Mammary epithelial cell (primary cell): ENCODE measurements at regions of chr1 and their contacts with region 1.

Region 1: DNA sequence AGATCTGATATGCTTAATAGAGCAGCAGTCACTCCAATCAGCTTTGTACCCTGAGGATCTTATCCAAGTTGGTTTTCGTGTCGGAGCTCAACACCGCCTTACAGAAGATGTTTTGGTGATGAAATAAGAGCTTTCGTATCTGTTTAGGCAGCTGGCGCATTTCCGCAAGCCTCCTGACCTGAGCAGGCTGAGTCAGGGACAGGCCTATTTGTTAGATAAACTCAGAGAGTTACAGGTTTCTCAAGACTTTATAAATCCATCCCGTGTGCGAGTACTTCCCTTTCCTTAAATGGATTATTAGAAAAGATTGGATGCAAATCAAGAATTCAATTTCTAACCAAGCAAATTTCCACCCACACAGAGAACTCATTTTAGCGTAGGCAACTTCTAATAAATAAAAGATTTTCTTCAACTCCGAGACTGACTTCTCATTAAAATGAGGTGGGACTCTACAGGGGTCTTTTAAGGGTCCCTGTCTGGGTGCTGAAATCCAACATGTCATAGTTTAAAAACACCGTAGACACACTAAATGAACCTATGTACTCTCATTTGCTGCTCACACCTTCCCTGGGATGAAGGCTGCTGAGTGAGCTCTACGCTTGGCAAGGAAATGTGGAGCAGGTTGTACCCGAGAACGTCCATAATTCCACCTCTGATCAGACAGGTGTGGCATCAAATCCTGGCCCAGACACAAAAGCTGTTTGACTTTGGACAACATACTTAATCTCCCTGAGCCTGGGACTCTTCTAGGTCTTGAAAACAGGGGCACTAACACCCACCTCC is 106.9 kb upstream of the F3 start:
- DNase-seq: peak; percentile 98
- H3K4me3 ChIP-seq: peak overlapping the region in 1 of 3 experiments; percentile 1
- H3K27ac ChIP-seq: peak overlapping the region; percentile 90
- H3K4me1 ChIP-seq: peaks cover 61% of the 10 kb centered on the region
- H3K27me3 ChIP-seq: no peaks in the 10 kb centered on the region
- CTCF ChIP-seq: no peak

Region 2: GRCh38 chr1:94527447-94528031 is 120.9 kb before region 1 on chr1:
- CTCF ChIA-PET with region 1: interaction called, 14 read pairs
- dilution Hi-C with region 1: no loop called
- in situ Hi-C with region 1: no loop called
- intact Hi-C with region 1: no loop called
- DNase-seq: peak; percentile 89
- H3K4me3 ChIP-seq: no peak overlapping the region
- H3K27ac ChIP-seq: peak overlapping the region; percentile 8
- H3K4me1 ChIP-seq: no peaks in the 10 kb centered on the region
- H3K27me3 ChIP-seq: no peaks in the 10 kb centered on the region
- CTCF ChIP-seq: peak; percentile 8 to 21

Region 3: GRCh38 chr1:94599095-94599813 is 49.2 kb before region 1 on chr1:
- CTCF ChIA-PET with region 1: no interaction called
- dilution Hi-C with region 1: no loop called
- in situ Hi-C with region 1: no loop called
- intact Hi-C with region 1: loop called (anchors 5 kb)
- DNase-seq: peak; percentile 57
- H3K4me3 ChIP-seq: no peak overlapping the region
- H3K27ac ChIP-seq: no peak overlapping the region
- H3K4me1 ChIP-seq: peaks cover 30% of the 10 kb centered on the region
- H3K27me3 ChIP-seq: no peaks in the 10 kb centered on the region
- CTCF ChIP-seq: peak; percentile 62 to 85

Region 4: DNA sequence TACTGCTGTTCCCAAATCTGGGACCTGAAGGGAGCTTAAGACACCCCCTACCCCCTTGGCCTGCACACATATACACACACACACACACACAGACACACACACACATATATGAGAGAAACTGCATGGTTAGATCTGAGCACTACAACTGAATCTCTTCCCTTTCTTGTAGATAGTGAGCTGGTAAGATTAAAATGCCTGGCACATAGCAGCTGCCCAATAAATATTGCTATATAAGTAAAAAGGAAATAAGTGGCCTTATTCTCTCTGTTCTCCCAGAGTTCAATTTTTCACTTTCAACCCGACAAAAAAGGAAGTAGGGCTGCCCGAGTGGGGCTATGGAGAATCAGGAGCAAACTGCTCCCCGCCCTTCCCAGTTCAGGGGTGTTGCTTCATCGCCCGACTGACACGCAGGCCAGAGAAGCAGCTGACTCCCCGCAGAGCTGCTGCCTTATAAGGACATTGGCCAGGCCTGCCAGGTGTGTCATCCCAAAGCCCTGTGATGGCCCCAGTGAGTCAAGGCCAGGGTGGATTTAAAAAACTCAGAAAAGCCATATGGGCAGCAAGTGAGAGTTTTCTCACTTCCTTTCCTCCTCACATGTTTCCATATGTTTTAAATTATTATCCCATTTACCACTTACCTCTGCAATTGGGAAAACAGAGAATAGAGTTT is 65.2 kb after region 1 on chr1:
- CTCF ChIA-PET with region 1: no interaction called
- dilution Hi-C with region 1: no loop called
- in situ Hi-C with region 1: no loop called
- intact Hi-C with region 1: loop called (anchors 1 kb)
- DNase-seq: peak; percentile 98
- H3K4me3 ChIP-seq: no peak overlapping the region
- H3K27ac ChIP-seq: peak overlapping the region; percentile 73
- H3K4me1 ChIP-seq: peaks cover 31% of the 10 kb centered on the region
- H3K27me3 ChIP-seq: no peaks in the 10 kb centered on the region
- CTCF ChIP-seq: no peak

Region 5: DNA sequence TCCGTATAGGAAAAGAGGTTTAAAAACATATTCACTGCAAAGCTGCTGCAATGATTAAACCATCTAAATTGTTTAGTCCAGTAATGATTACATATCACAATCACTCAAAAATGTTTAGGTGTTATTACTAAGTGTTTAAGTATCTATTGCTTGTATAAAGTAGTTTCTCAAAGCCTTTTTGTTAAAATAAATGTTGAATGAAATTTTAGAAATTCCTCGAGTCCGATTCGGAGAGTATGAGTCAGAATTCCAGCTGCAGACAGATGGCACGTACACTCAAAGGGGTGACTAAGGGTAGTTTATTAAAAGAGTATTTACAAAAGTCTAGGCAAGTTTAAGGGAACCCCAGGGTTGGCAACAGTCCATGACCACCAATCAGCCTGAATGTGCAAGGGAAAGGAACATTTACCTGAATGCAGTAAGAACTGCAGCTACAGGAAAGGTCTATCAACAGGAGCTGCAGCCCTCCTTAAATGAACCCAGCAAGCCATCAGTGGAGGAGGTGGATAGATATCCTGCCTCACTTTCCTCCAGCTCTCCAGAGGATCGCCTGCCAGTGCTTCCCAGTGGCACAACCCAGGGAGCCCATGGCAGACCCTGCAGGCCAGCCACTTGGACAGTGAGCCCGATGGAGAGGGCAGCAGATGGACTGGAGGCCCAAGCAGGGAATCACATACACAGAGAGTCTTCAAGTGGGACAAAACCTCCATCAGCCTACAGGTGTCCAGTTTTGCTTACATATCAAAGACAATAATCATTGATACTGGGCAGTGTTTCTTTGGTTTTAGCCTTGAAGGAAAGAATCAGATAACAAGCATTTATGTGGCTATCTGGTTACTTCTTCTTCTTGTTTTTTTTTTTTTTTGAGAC is 79.7 kb after region 1 on chr1:
- CTCF ChIA-PET with region 1: no interaction called
- dilution Hi-C with region 1: no loop called
- in situ Hi-C with region 1: loop called in 1 of 2 experiments (anchors 10 kb)
- intact Hi-C with region 1: loop called (anchors 1 kb)
- DNase-seq: peak; percentile 98
- H3K4me3 ChIP-seq: no peak overlapping the region
- H3K27ac ChIP-seq: peak overlapping the region; percentile 71
- H3K4me1 ChIP-seq: peaks cover 67% of the 10 kb centered on the region
- H3K27me3 ChIP-seq: no peaks in the 10 kb centered on the region
- CTCF ChIP-seq: no peak

Region 6: GRCh38 chr1:94792473-94793295 is 144.3 kb after region 1 on chr1:
- CTCF ChIA-PET with region 1: interaction called, 3 read pairs
- dilution Hi-C with region 1: no loop called
- in situ Hi-C with region 1: no loop called
- intact Hi-C with region 1: loop called (anchors 2 kb)
- DNase-seq: peak; percentile 96
- H3K4me3 ChIP-seq: peak overlapping the region in 1 of 3 experiments; percentile 16
- H3K27ac ChIP-seq: peak overlapping the region; percentile 81
- H3K4me1 ChIP-seq: peaks cover 35% of the 10 kb centered on the region
- H3K27me3 ChIP-seq: no peaks in the 10 kb centered on the region
- CTCF ChIP-seq: peak; percentile 41 to 56